Mammary epithelial cell (primary cell): ENCODE measurements at regions of chr1 and their contacts with region 1.

Region 1: GRCh38 chr1:99969729-99970621 is at the start of gene SLC35A3:
- DNase-seq: peak; percentile 77
- H3K4me3 ChIP-seq: peak within 1 kb of the TSS; percentile 50 to 90 (median 69)
- H3K27ac ChIP-seq: peak within 1 kb of the TSS; percentile 84
- H3K4me1 ChIP-seq: peaks cover 13% of the 10 kb centered on the region
- H3K27me3 ChIP-seq: no peaks in the 10 kb centered on the region
- CTCF ChIP-seq: no peak
- total RNA-seq, gene SLC35A3: 29.5 to 46.2 TPM

Region 2: DNA sequence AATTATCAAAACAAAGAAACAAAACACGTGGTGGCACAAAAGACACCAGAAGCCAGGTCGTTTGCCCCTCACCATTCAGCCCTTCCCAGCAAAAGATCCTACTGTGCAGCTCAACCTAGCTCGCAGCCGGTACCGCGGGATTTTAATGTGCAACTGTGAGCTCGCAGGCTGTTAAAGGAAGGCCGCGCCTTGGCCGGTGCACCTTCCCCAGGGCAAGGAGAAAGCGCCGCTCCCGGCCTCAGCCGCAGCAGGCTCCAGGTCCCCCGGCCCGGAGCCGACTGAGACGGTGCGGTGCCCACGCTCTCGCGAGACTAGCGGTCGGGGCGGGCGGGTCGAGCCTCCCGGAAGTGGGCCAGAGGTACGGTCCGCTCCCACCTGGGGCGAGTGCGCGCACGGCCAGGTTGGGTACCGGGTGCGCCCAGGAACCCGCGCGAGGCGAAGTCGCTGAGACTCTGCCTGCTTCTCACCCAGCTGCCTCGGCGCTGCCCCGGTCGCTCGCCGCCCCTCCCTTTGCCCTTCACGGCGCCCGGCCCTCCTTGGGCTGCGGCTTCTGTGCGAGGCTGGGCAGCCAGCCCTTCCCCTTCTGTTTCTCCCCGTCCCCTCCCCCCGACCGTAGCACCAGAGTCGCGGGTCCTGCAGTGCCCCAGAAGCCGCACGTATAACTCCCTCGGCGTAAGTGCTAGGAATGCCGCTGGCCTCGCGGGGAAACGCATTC is 120.1 kb before region 1 on chr1 and contains the start of gene AGL:
- CTCF ChIA-PET with region 1: no interaction called
- dilution Hi-C with region 1: no loop called
- in situ Hi-C with region 1: no loop called
- intact Hi-C with region 1: loop called (anchors 5 kb)
- DNase-seq: peak; percentile 84
- H3K4me3 ChIP-seq: peak within 1 kb of the TSS; percentile 88 to 90 (median 88)
- H3K27ac ChIP-seq: peak within 1 kb of the TSS; percentile 42
- H3K4me1 ChIP-seq: peaks cover 7% of the 10 kb centered on the region
- H3K27me3 ChIP-seq: no peaks in the 10 kb centered on the region
- CTCF ChIP-seq: no peak
- total RNA-seq, gene AGL: 15.6 to 31.3 TPM

Region 3: GRCh38 chr1:100009458-100009857 is 39.5 kb after region 1 on chr1:
- CTCF ChIA-PET with region 1: no interaction called
- dilution Hi-C with region 1: no loop called
- in situ Hi-C with region 1: no loop called
- intact Hi-C with region 1: no loop called
- DNase-seq: peak; percentile 36
- H3K4me3 ChIP-seq: no peak overlapping the region
- H3K27ac ChIP-seq: no peak overlapping the region
- H3K4me1 ChIP-seq: peaks cover 6% of the 10 kb centered on the region
- H3K27me3 ChIP-seq: no peaks in the 10 kb centered on the region
- CTCF ChIP-seq: no peak

Region 4: DNA sequence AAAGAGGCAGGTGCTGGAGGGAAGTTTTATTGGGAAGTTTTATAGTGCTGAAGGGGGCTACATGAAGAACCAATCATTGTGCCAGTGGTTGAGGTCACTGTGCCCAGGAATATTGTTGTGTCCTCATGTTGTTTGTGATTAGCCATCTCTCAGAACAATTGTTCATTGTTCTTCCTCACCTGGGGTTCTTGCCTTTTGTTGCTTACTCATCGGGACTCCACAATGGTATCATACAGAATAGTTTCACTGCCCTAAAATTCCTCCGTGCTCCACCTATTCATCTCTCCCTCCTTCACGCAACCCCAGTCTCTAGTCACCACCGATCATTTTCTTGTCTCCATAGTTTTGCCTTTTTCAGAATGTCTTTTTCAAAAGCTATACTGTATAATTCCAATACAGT is 343.4 kb after region 1 on chr1:
- CTCF ChIA-PET with region 1: no interaction called
- dilution Hi-C with region 1: no loop called
- in situ Hi-C with region 1: no loop called
- intact Hi-C with region 1: no loop called
- DNase-seq: peak; percentile 95
- H3K4me3 ChIP-seq: no peak overlapping the region
- H3K27ac ChIP-seq: peak overlapping the region; percentile 98
- H3K4me1 ChIP-seq: peaks cover 21% of the 10 kb centered on the region
- H3K27me3 ChIP-seq: no peaks in the 10 kb centered on the region
- CTCF ChIP-seq: no peak